HEK293T (cell line): ENCODE measurements at regions of chr1 and their contacts with region 1.

Region 1: GRCh38 chr1:228165372-228166169 is at the start of gene IBA57:
- DNase-seq: peak; percentile 100

Region 2: GRCh38 chr1:228131766-228132165 is 33.8 kb before region 1 on chr1:
- CTCF ChIA-PET with region 1: interaction called, 7 read pairs
- POLR2A ChIA-PET with region 1: interaction called, 12 read pairs
- DNase-seq: no peak

Region 3: DNA sequence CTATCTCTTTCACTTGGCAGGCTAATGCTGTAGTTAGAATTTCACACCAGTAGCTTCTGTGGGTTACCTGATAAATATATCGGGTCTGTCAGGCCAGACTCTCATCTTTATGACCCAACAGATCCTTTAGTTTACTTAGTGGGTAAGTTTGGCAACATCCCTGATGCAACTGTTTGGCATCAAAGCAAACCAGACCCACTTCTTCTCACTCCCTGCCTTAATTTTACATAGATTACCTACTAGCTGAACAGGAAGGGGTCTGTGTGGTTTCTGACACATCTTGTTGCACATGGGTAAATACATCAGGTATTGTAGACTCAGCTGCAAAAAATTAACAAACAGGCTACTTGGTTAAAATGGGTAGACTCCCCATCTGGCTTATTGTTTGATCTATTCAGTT is 28.7 kb before region 1 on chr1:
- CTCF ChIA-PET with region 1: no interaction called
- POLR2A ChIA-PET with region 1: interaction called, 12 read pairs
- DNase-seq: no peak

Region 4: GRCh38 chr1:228142701-228143136 is 22.9 kb before region 1 on chr1:
- CTCF ChIA-PET with region 1: no interaction called
- POLR2A ChIA-PET with region 1: interaction called, 20 read pairs
- DNase-seq: no peak

Region 5: GRCh38 chr1:228150461-228151179 is 15.0 kb before region 1 on chr1:
- CTCF ChIA-PET with region 1: no interaction called
- POLR2A ChIA-PET with region 1: interaction called, 55 read pairs
- DNase-seq: no peak

Region 6: GRCh38 chr1:228275739-228276421 is 110.3 kb after region 1 on chr1:
- CTCF ChIA-PET with region 1: no interaction called
- POLR2A ChIA-PET with region 1: no interaction called
- DNase-seq: peak; percentile 46